MCF 10A (cell line): ENCODE measurements at regions of chr6 and their contacts with region 1.

Region 1: GRCh38 chr6:6547110-6547879 is 41.2 kb upstream of the LY86 start:
- DNase-seq: peak; percentile 76
- H3K4me3 Mint-ChIP-seq: peak overlapping the region; percentile 53
- H3K27ac Mint-ChIP-seq: no peak overlapping the region
- H3K4me1 Mint-ChIP-seq: no peaks in the 10 kb centered on the region
- H3K27me3 Mint-ChIP-seq: peaks cover 14% of the 10 kb centered on the region
- CTCF ChIP-seq: peak; percentile 92

Region 2: DNA sequence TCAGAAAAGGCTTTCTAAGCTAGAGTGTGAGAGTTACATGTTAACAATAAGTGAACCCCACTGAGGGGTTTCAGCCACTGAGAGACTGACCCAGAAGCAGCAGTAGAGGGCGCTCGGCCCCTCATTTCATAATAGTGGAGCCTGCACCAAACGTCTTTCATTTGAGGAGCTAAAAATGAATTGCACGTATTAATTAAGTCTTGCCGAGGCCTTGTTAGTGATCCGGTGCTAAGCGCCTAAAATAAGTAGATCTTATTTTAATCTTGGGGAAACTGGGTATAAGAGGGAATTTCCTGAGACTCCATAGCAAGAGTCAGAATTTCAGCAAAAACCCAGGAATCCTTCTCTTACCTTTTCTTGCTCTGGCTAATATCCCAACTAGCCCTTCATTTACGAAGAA is 1076.3 kb before region 1 on chr6:
- CTCF ChIA-PET with region 1: interaction called, 4 read pairs
- POLR2A ChIA-PET with region 1: interaction called, 3 read pairs
- intact Hi-C with region 1: loop called (anchors 1 kb)
- DNase-seq: peak; percentile 63
- H3K4me3 Mint-ChIP-seq: no peak overlapping the region
- H3K27ac Mint-ChIP-seq: no peak overlapping the region
- H3K4me1 Mint-ChIP-seq: no peaks in the 10 kb centered on the region
- H3K27me3 Mint-ChIP-seq: no peaks in the 10 kb centered on the region
- CTCF ChIP-seq: peak; percentile 83

Region 3: GRCh38 chr6:6057424-6058053 is 489.8 kb before region 1 on chr6:
- CTCF ChIA-PET with region 1: interaction called, 111 read pairs
- POLR2A ChIA-PET with region 1: no interaction called
- intact Hi-C with region 1: loop called (anchors 1 kb)
- DNase-seq: peak; percentile 66
- H3K4me3 Mint-ChIP-seq: no peak overlapping the region
- H3K27ac Mint-ChIP-seq: no peak overlapping the region
- H3K4me1 Mint-ChIP-seq: no peaks in the 10 kb centered on the region
- H3K27me3 Mint-ChIP-seq: peaks cover 28% of the 10 kb centered on the region
- CTCF ChIP-seq: peak; percentile 57

Region 4: GRCh38 chr6:6131492-6132109 is 415.7 kb before region 1 on chr6:
- CTCF ChIA-PET with region 1: interaction called, 5 read pairs
- POLR2A ChIA-PET with region 1: no interaction called
- intact Hi-C with region 1: loop called (anchors 1 kb)
- DNase-seq: peak; percentile 51
- H3K4me3 Mint-ChIP-seq: no peak overlapping the region
- H3K27ac Mint-ChIP-seq: no peak overlapping the region
- H3K4me1 Mint-ChIP-seq: no peaks in the 10 kb centered on the region
- H3K27me3 Mint-ChIP-seq: peaks cover 15% of the 10 kb centered on the region
- CTCF ChIP-seq: peak; percentile 38

Region 5: GRCh38 chr6:6315660-6316059 is 231.6 kb before region 1 on chr6:
- CTCF ChIA-PET with region 1: interaction called, 4 read pairs
- POLR2A ChIA-PET with region 1: no interaction called
- intact Hi-C with region 1: loop called (anchors 2 kb)
- DNase-seq: peak; percentile 56
- H3K4me3 Mint-ChIP-seq: no peak overlapping the region
- H3K27ac Mint-ChIP-seq: no peak overlapping the region
- H3K4me1 Mint-ChIP-seq: no peaks in the 10 kb centered on the region
- H3K27me3 Mint-ChIP-seq: peaks cover 21% of the 10 kb centered on the region
- CTCF ChIP-seq: peak; percentile 85

Region 6: GRCh38 chr6:6533176-6533575 is 14.1 kb before region 1 on chr6:
- CTCF ChIA-PET with region 1: interaction called, 11 read pairs
- POLR2A ChIA-PET with region 1: interaction called, 4 read pairs
- intact Hi-C with region 1: no loop called
- DNase-seq: no peak
- H3K4me3 Mint-ChIP-seq: no peak overlapping the region
- H3K27ac Mint-ChIP-seq: no peak overlapping the region
- H3K4me1 Mint-ChIP-seq: peaks cover 11% of the 10 kb centered on the region
- H3K27me3 Mint-ChIP-seq: no peaks in the 10 kb centered on the region
- CTCF ChIP-seq: no peak

Region 7: GRCh38 chr6:6569481-6570167 is 22.3 kb after region 1 on chr6:
- CTCF ChIA-PET with region 1: no interaction called
- POLR2A ChIA-PET with region 1: no interaction called
- intact Hi-C with region 1: no loop called
- DNase-seq: peak; percentile 25
- H3K4me3 Mint-ChIP-seq: no peak overlapping the region
- H3K27ac Mint-ChIP-seq: no peak overlapping the region
- H3K4me1 Mint-ChIP-seq: peaks cover 28% of the 10 kb centered on the region
- H3K27me3 Mint-ChIP-seq: no peaks in the 10 kb centered on the region
- CTCF ChIP-seq: no peak